ENCODE measurements at regions of chr12 and their contacts with region 1.

Region 1: DNA sequence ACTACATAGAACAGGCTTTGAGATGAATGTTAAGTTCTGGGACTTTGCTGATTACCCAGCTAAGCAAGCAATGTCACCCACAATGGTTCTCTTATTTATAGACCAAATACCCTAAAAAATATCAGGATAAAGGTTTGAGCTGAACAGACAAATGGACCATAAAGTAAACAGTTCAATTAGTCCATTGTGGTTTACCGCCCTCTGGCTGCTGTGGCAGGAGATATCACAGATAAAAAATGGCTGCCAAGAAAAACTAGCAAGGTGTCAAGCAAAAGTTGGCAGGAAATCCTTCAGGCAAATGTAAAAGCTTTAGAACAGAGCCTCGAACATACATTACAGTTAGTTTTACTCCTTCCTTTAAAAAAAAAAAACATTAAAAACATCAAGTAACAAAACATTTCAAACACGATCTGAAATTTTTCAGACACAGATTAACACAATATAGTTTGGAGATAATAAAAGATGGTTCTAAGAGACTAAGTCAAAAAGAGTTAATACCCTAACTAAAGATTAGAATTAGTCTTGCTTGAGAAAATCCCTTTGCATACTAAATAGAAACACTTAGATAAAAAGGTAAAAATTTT is 41.3 kb downstream of the MED13L start:
- DNase-seq: peak; percentile 48
- H3K4me3 ChIP-seq: no peak overlapping the region
- H3K27ac ChIP-seq: peak overlapping the region; percentile 31; a peak in 2 of 4 replicates
- H3K4me1 ChIP-seq: peaks cover 6 to 22% of the 10 kb centered on the region in 2 experiments; a peak in 3 of 4 replicates
- H3K27me3 ChIP-seq: no peaks in the 10 kb centered on the region
- CTCF ChIP-seq: peak; percentile 72
- EP300 ChIP-seq: 0 out of 4 replicates have a peak, but pooled peaks of 1 of the 2 experiments have one; percentile 14
- RAD21 ChIP-seq: peak; percentile 84

Region 2: GRCh38 chr12:115785548-115785947 is 450.7 kb before region 1 on chr12:
- CTCF ChIA-PET with region 1: no interaction called
- POLR2A ChIA-PET with region 1: no interaction called
- DNase-seq: no peak
- H3K4me3 ChIP-seq: no peak overlapping the region
- H3K27ac ChIP-seq: no peak overlapping the region
- H3K4me1 ChIP-seq: no peaks in the 10 kb centered on the region
- H3K27me3 ChIP-seq: no peaks in the 10 kb centered on the region
- CTCF ChIP-seq: no peak
- EP300 ChIP-seq: no peak
- RAD21 ChIP-seq: no peak

Region 3: GRCh38 chr12:116222358-116222757 is 13.9 kb before region 1 on chr12:
- CTCF ChIA-PET with region 1: interaction called, 11 read pairs
- POLR2A ChIA-PET with region 1: no interaction called
- DNase-seq: no peak
- H3K4me3 ChIP-seq: no peak overlapping the region
- H3K27ac ChIP-seq: peak overlapping the region in 1 of 2 experiments; percentile 49; a peak in 2 of 4 replicates
- H3K4me1 ChIP-seq: peaks cover 0 to 14% of the 10 kb centered on the region in 2 experiments; a peak in 2 of 4 replicates
- H3K27me3 ChIP-seq: no peaks in the 10 kb centered on the region
- CTCF ChIP-seq: no peak
- EP300 ChIP-seq: peak in 1 of 2 experiments; percentile 43; a peak in 1 of 4 replicates
- RAD21 ChIP-seq: no peak